ENCODE measurements at regions of chr18 and their contacts with region 1.

Region 1: DNA sequence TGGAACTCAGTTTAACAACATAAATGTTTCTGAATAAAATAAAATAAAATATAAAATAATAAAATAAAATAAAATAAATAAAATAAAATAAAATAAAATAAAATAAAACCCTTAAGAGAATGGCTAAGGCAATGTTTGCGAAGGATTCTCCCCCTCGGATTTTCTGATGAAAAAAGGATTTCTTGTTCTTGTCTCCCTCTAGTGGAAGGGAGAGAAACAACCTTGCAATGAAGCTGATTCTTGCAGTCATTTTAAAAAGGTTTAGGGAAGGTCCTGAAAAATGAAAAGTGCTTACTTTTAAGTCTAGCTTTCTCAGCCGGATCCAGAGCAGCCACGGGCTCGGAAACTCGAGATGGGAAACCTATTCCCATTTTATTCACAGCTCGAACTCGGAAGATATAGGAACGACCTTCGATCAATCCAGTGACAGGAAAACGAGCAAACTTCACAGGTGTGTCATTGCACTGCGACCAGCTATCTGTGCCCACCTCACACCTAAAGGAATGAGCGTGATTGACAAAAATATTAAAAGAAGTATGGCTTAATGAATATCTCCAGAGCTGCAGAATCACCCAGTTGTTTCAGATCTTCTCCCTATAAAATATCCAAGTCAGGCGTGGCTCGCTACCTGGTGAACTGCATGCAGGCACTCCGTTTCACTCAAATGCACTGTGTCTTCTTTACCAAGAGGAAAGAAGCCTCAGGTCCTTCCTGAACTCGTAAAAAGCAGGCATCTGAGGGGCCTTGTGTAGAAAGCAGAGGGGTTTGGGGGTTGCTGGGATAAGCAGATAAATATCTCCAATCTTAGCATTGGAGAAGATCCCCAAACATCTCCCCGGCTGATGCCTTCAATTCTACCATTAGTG is 68.1 kb downstream of the MYOM1 start:
- DNase-seq: peak; percentile 35
- H3K4me3 ChIP-seq: no peak overlapping the region
- H3K27ac ChIP-seq: no peak overlapping the region
- H3K4me1 ChIP-seq: peaks cover 12% of the 10 kb centered on the region
- H3K27me3 ChIP-seq: no peaks in the 10 kb centered on the region
- CTCF ChIP-seq: peak; percentile 54
- POLR2A ChIP-seq: no peak

Region 2: GRCh38 chr18:2948038-2948437 is 203.6 kb before region 1 on chr18:
- CTCF ChIA-PET with region 1: interaction called, 15 read pairs
- POLR2A ChIA-PET with region 1: no interaction called
- dilution Hi-C with region 1: no loop called
- intact Hi-C with region 1: no loop called
- DNase-seq: peak; percentile 62
- H3K4me3 ChIP-seq: no peak overlapping the region
- H3K27ac ChIP-seq: peak overlapping the region; percentile 5
- H3K4me1 ChIP-seq: no peaks in the 10 kb centered on the region
- H3K27me3 ChIP-seq: no peaks in the 10 kb centered on the region
- CTCF ChIP-seq: peak in 1 of 2 donors; percentile 38
- POLR2A ChIP-seq: no peak

Region 3: GRCh38 chr18:2994603-2995432 is 156.8 kb before region 1 on chr18:
- CTCF ChIA-PET with region 1: interaction called, 13 read pairs
- POLR2A ChIA-PET with region 1: no interaction called
- dilution Hi-C with region 1: no loop called
- intact Hi-C with region 1: no loop called
- DNase-seq: no peak
- H3K4me3 ChIP-seq: no peak overlapping the region
- H3K27ac ChIP-seq: no peak overlapping the region
- H3K4me1 ChIP-seq: no peaks in the 10 kb centered on the region
- H3K27me3 ChIP-seq: no peaks in the 10 kb centered on the region
- CTCF ChIP-seq: peak in 1 of 2 donors; percentile 9
- POLR2A ChIP-seq: no peak

Region 4: GRCh38 chr18:3104190-3105054 is 47.2 kb before region 1 on chr18:
- CTCF ChIA-PET with region 1: interaction called, 15 read pairs
- POLR2A ChIA-PET with region 1: no interaction called
- dilution Hi-C with region 1: no loop called
- intact Hi-C with region 1: no loop called
- DNase-seq: peak; percentile 91
- H3K4me3 ChIP-seq: peak overlapping the region in 1 of 3 experiments; percentile 21
- H3K27ac ChIP-seq: peak overlapping the region; percentile 96
- H3K4me1 ChIP-seq: peaks cover 30% of the 10 kb centered on the region
- H3K27me3 ChIP-seq: no peaks in the 10 kb centered on the region
- CTCF ChIP-seq: no peak
- POLR2A ChIP-seq: no peak

Region 5: GRCh38 chr18:3170441-3171161 is 19.0 kb after region 1 on chr18:
- CTCF ChIA-PET with region 1: interaction called, 11 read pairs
- POLR2A ChIA-PET with region 1: no interaction called
- dilution Hi-C with region 1: no loop called
- intact Hi-C with region 1: no loop called
- DNase-seq: no peak
- H3K4me3 ChIP-seq: no peak overlapping the region
- H3K27ac ChIP-seq: no peak overlapping the region
- H3K4me1 ChIP-seq: no peaks in the 10 kb centered on the region
- H3K27me3 ChIP-seq: peaks cover 0 to 4% of the 10 kb centered on the region in 2 experiments
- CTCF ChIP-seq: no peak
- POLR2A ChIP-seq: no peak